ENCODE measurements at regions of chr12 and their contacts with region 1.

Region 1: DNA sequence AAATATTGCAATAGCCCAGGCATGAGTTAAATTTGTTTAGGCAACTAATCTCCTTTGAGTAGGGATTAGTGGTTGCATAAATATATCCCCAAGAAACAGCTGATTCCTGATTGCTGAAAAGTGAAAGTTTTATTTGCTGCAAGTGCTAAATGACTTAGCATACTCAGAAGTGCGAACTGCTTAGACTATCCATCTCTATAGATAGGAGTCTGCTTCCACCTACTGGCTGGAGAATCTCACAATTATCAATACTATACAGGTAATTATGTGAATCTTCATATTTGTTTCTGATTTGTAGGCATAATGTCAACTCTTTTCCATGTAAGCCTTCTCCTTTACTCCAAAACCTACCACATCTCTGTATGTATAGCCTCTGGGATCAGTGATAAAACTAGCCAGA is 11.9 kb upstream of the SLCO1B3 start:
- DNase-seq: no peak
- H3K4me3 ChIP-seq: no peak overlapping the region
- H3K27ac ChIP-seq: no peak overlapping the region
- H3K4me1 ChIP-seq: no peaks in the 10 kb centered on the region
- H3K27me3 ChIP-seq: no peaks in the 10 kb centered on the region
- CTCF ChIP-seq: peak; percentile 36

Region 2: GRCh38 chr12:20451761-20452160 is 346.8 kb before region 1 on chr12:
- intact Hi-C with region 1: no loop called
- DNase-seq: no peak
- H3K4me3 ChIP-seq: no peak overlapping the region
- H3K27ac ChIP-seq: no peak overlapping the region
- H3K4me1 ChIP-seq: no peaks in the 10 kb centered on the region
- H3K27me3 ChIP-seq: no peaks in the 10 kb centered on the region
- CTCF ChIP-seq: no peak

Region 3: GRCh38 chr12:20646239-20646827 is 152.2 kb before region 1 on chr12:
- intact Hi-C with region 1: loop called (anchors 2 kb)
- DNase-seq: no peak
- H3K4me3 ChIP-seq: no peak overlapping the region
- H3K27ac ChIP-seq: no peak overlapping the region
- H3K4me1 ChIP-seq: no peaks in the 10 kb centered on the region
- H3K27me3 ChIP-seq: no peaks in the 10 kb centered on the region
- CTCF ChIP-seq: peak; percentile 26

Region 4: DNA sequence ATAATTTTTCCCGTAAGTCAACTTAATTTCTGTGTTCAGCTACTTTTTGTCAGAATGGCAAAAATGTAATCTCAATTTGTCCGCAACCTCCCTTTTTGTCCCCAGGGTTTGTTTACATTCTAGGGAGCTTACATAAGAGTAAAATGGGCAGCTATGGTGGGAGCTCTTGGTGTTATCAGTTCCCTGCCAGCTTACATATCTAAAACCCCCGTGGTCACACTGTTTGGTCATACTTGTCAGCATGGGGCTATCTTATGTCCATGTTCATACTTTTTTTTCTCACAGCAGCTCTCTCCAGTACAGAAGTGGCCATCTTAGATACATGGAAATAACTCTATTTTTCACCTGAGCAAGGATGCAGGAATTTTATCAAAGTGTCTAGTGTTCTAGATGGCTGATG is 86.7 kb before region 1 on chr12:
- intact Hi-C with region 1: loop called (anchors 5 kb)
- DNase-seq: no peak
- H3K4me3 ChIP-seq: no peak overlapping the region
- H3K27ac ChIP-seq: no peak overlapping the region
- H3K4me1 ChIP-seq: no peaks in the 10 kb centered on the region
- H3K27me3 ChIP-seq: no peaks in the 10 kb centered on the region
- CTCF ChIP-seq: no peak